Ascending aorta (tissue), 2 donors: ENCODE measurements at regions of chr15 and their contacts with region 1.

Region 1: GRCh38 chr15:97598353-97598798 is 362.1 kb upstream of the ARRDC4 start:
- DNase-seq: no peak
- H3K4me3 ChIP-seq: no peak overlapping the region
- H3K27ac ChIP-seq: no peak overlapping the region
- H3K4me1 ChIP-seq: no peaks in the 10 kb centered on the region
- H3K27me3 ChIP-seq: no peaks in the 10 kb centered on the region
- CTCF ChIP-seq: no peak

Region 2: DNA sequence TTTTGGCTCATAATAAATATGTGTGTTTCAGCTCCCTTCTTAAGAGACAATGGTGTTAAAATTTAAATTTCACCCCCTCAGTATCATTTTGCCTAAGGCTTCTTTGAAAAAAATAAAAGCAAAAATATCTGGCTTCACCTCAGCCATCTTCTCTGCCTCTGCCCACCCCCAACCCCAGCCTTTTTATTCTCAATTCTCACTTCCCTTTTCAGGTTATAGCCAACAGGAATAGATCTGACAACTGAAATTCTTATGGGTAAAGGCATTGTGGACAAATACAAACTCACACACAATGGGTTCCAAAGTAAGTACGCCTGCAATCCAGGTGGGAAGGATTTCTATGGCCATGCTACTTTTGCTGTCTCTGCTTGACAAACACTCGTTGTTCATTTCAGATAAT is 36.8 kb before region 1 on chr15:
- intact Hi-C with region 1: loop called (anchors 5 kb)
- DNase-seq: no peak
- H3K4me3 ChIP-seq: no peak overlapping the region
- H3K27ac ChIP-seq: no peak overlapping the region
- H3K4me1 ChIP-seq: no peaks in the 10 kb centered on the region
- H3K27me3 ChIP-seq: no peaks in the 10 kb centered on the region
- CTCF ChIP-seq: no peak

Region 3: GRCh38 chr15:97652700-97653167 is 54.4 kb after region 1 on chr15:
- intact Hi-C with region 1: loop called (anchors 10 kb)
- DNase-seq: no peak
- H3K4me3 ChIP-seq: peak overlapping the region in 1 of 2 donors; percentile 5
- H3K27ac ChIP-seq: no peak overlapping the region
- H3K4me1 ChIP-seq: no peaks in the 10 kb centered on the region
- H3K27me3 ChIP-seq: no peaks in the 10 kb centered on the region
- CTCF ChIP-seq: no peak

Region 4: DNA sequence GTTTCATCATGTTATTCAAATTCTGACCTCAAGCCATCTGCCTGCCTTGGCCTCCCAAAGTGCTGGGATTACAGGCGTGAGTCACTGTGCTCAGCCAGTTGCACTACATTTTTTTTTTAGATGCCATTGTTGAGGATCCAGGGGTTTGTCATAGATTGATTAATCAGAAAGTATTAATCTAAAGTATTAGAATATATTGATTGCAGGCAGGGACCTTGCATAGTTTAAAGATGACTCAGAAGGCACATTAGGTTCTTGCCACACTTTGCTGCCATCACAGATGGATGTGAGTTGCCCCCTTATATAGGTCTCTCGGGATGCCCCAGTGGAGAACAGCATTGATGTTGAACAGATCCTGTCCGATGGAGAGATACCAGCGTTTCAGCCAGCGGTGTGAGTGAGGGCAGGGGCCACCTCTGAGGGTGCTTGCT is 1091.1 kb after region 1 on chr15:
- intact Hi-C with region 1: no loop called
- DNase-seq: no peak
- H3K4me3 ChIP-seq: no peak overlapping the region
- H3K27ac ChIP-seq: no peak overlapping the region
- H3K4me1 ChIP-seq: peaks cover 0 to 36% of the 10 kb centered on the region in 2 donors
- H3K27me3 ChIP-seq: no peaks in the 10 kb centered on the region
- CTCF ChIP-seq: no peak